ENCODE measurements at regions of chr17 and their contacts with region 1.

Region 1: GRCh38 chr17:80101011-80101945 is at the start of gene GAA:
- DNase-seq: peak; percentile 84 to 91
- ATAC-seq: peak; percentile 80 to 89
- H3K4me3 ChIP-seq: peak within 1 kb of the TSS; percentile 88
- H3K27ac ChIP-seq: peak within 1 kb of the TSS; percentile 90 to 94
- H3K4me1 ChIP-seq: peaks cover 11% of the 10 kb centered on the region
- CTCF ChIP-seq: peak; percentile 99
- EP300 ChIP-seq: no peak
- POLR2A ChIP-seq: peak; percentile 93
- RAD21 ChIP-seq: peak; percentile 18 to 68; a peak in 3 of 5 replicates
- polyA plus RNA-seq, gene GAA: 5.7 and 9.5 TPM in 2 replicates

Region 2: GRCh38 chr17:79839363-79840268 is 261.7 kb before region 1 on chr17 and contains the start of gene CBX4:
- CTCF ChIA-PET with region 1: no interaction called
- POLR2A ChIA-PET with region 1: no interaction called
- DNase-seq: peak; percentile 87 to 97
- ATAC-seq: peak; percentile 61 to 73
- H3K4me3 ChIP-seq: peak within 1 kb of the TSS; percentile 82
- H3K27ac ChIP-seq: peak within 1 kb of the TSS; percentile 95 to 98
- H3K4me1 ChIP-seq: peaks cover 52% of the 10 kb centered on the region
- CTCF ChIP-seq: peak; percentile 99
- EP300 ChIP-seq: peak in 1 of 2 experiments; percentile 55; a peak in 1 of 5 replicates
- POLR2A ChIP-seq: peak; percentile 77
- RAD21 ChIP-seq: peak; percentile 55 to 90
- polyA plus RNA-seq, gene CBX4: 21.9 and 34.1 TPM in 2 replicates

Region 3: DNA sequence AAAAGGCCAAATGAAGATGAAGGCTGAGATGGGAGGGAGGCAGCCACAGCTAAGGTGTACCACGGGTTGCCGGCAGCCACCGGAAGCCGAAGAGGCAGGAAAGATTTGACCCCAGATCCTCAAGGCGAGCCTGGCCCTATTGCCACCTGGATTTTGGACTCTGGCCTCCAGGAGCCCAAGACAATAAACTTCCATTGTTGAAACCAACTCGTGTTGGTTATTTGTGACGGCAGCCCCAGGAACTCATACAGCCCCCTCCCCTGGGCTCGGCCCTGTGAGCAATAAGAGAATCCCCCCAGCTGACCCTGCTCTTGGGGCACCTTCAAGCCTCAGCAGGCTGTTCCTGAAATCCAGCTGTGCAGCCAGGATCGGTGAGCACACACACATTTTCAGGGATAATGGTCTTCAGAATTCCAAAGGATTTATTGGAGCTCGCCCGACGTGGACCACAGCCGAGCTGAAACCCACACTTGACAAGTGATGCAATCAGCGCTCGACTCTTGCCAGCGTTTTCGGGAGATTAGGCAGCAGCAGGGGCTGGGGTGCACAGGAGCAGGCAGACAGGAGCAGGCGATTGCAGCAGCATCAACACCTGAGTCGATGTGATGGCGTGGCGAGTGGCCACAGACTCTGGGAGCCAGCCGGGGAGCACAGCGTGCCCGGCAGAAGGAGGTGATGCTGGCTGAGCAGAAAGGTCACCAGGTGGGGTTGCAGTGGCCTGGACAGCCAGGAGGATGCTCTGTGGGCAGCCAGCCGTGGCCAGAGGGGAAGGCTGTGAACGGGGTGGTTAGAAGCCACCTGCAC is 239.7 kb before region 1 on chr17:
- CTCF ChIA-PET with region 1: no interaction called
- POLR2A ChIA-PET with region 1: no interaction called
- DNase-seq: no peak
- ATAC-seq: peak in 1 of 2 experiments; percentile 13; a peak in 1 of 6 replicates
- H3K4me3 ChIP-seq: no peak overlapping the region
- H3K27ac ChIP-seq: no peak overlapping the region
- H3K4me1 ChIP-seq: no peaks in the 10 kb centered on the region
- CTCF ChIP-seq: no peak
- EP300 ChIP-seq: no peak
- POLR2A ChIP-seq: no peak
- RAD21 ChIP-seq: no peak

Region 4: DNA sequence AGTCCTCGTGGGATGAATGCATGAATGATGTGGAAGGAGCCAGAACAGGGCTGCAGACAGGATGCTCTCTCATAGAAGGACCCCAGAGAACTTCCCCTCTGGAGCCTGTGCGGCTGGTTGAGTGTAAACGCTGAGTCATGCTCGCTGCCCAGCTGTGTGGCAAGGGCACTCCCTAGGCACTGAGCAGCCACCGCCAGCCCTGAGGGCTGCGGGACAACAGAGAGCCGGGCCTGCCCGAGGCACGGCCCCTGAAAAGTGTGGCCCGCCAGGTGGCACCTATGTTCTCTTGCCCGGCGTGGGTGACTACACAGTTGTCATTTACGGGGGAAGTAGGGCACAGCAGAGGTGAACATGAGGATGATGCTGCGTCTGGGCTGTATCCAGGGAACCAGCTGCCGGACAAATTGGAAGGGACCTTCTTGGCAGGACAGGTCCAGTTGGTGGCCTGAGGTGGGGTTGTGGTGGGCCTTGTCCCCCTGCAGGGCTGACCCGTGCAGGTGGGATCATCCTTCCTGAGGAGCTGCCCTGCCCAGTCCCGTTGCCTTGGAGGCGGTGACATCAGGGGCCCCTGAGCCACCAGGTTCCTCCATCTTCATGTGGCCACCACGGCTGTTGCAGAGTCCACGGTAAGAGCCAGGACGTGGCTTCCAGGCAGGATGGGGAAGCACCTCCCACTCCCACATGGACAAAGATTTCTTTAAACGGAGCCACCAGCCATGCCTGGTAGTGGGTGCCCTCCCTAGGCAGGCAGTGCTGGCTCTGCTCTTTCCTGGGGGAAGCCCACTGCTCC is 167.2 kb before region 1 on chr17:
- CTCF ChIA-PET with region 1: no interaction called
- POLR2A ChIA-PET with region 1: no interaction called
- DNase-seq: peak; percentile 58 to 60
- ATAC-seq: peak; percentile 21 to 53; a peak in 4 of 6 replicates
- H3K4me3 ChIP-seq: no peak overlapping the region
- H3K27ac ChIP-seq: peak overlapping the region; percentile 94
- H3K4me1 ChIP-seq: peaks cover 69% of the 10 kb centered on the region
- CTCF ChIP-seq: peak; percentile 6; the same call in 1 of the 3 replicates
- EP300 ChIP-seq: no peak
- POLR2A ChIP-seq: no peak
- RAD21 ChIP-seq: no peak; a peak in 1 of 5 replicates

Region 5: GRCh38 chr17:80071116-80071980 is 29.9 kb before region 1 on chr17:
- CTCF ChIA-PET with region 1: interaction called, 13 read pairs
- POLR2A ChIA-PET with region 1: no interaction called
- DNase-seq: no peak
- ATAC-seq: peak in 1 of 2 experiments; percentile 19; a peak in 1 of 6 replicates
- H3K4me3 ChIP-seq: no peak overlapping the region
- H3K27ac ChIP-seq: no peak overlapping the region
- H3K4me1 ChIP-seq: no peaks in the 10 kb centered on the region
- CTCF ChIP-seq: no peak
- EP300 ChIP-seq: no peak
- POLR2A ChIP-seq: no peak
- RAD21 ChIP-seq: no peak

Region 6: GRCh38 chr17:80124351-80124981 is 23.2 kb after region 1 on chr17:
- CTCF ChIA-PET with region 1: interaction called, 99 read pairs
- POLR2A ChIA-PET with region 1: interaction called, 5 read pairs
- DNase-seq: peak; percentile 45 to 53
- ATAC-seq: peak; percentile 71 to 87
- H3K4me3 ChIP-seq: no peak overlapping the region
- H3K27ac ChIP-seq: no peak overlapping the region
- H3K4me1 ChIP-seq: no peaks in the 10 kb centered on the region
- CTCF ChIP-seq: peak; percentile 36
- EP300 ChIP-seq: no peak
- POLR2A ChIP-seq: no peak; the same call in 1 of the 2 replicates
- RAD21 ChIP-seq: peak; percentile 19 to 32; a peak in 2 of 5 replicates

Region 7: DNA sequence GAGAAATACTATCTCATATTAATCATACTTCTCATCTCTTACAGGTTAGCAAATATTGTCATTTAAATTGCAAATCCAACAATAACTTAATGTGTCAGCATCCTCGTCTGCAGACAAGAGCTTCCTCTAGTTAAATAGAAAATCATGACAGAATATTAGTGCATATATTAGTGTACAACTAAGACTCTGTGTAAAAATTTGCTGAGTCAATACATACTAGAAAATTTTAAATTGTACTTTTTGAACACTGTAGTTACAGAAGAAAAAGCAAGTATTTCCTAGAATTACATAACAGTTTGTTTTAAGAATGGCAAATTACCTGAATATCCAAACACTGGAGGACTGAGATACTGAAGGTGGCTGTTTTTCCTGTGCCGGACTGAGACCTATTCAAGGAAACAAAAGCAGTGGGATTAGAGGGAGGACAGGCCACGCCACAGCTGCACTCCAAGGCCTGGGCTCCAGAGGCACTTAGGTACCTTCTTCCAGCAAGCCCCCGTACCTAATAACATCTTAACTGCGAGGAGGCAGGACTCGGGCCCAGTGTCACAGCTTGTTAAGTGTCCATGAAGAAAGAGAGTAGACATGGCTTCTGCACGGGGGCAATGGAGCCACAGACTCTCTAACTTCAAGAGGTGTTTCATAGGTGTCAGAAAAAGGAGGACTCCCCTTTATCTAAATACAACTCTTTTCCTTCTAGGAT is 40.3 kb after region 1 on chr17:
- CTCF ChIA-PET with region 1: interaction called, 17 read pairs
- POLR2A ChIA-PET with region 1: interaction called, 21 read pairs
- DNase-seq: no peak
- ATAC-seq: no peak
- H3K4me3 ChIP-seq: no peak overlapping the region
- H3K27ac ChIP-seq: no peak overlapping the region
- H3K4me1 ChIP-seq: peaks cover 19% of the 10 kb centered on the region
- CTCF ChIP-seq: no peak
- EP300 ChIP-seq: no peak
- POLR2A ChIP-seq: no peak
- RAD21 ChIP-seq: no peak

Region 8: GRCh38 chr17:80187515-80187941 is 86.2 kb after region 1 on chr17:
- CTCF ChIA-PET with region 1: interaction called, 18 read pairs
- POLR2A ChIA-PET with region 1: interaction called, 3 read pairs
- DNase-seq: peak in 1 of 2 experiments; percentile 51
- ATAC-seq: peak; percentile 30 to 70; a peak in 5 of 6 replicates
- H3K4me3 ChIP-seq: peak overlapping the region; percentile 27; the same call in 1 of the 3 replicates
- H3K27ac ChIP-seq: peak overlapping the region; percentile 67 to 70
- H3K4me1 ChIP-seq: peaks cover 15% of the 10 kb centered on the region
- CTCF ChIP-seq: no peak
- EP300 ChIP-seq: no peak
- POLR2A ChIP-seq: no peak
- RAD21 ChIP-seq: no peak

Region 9: DNA sequence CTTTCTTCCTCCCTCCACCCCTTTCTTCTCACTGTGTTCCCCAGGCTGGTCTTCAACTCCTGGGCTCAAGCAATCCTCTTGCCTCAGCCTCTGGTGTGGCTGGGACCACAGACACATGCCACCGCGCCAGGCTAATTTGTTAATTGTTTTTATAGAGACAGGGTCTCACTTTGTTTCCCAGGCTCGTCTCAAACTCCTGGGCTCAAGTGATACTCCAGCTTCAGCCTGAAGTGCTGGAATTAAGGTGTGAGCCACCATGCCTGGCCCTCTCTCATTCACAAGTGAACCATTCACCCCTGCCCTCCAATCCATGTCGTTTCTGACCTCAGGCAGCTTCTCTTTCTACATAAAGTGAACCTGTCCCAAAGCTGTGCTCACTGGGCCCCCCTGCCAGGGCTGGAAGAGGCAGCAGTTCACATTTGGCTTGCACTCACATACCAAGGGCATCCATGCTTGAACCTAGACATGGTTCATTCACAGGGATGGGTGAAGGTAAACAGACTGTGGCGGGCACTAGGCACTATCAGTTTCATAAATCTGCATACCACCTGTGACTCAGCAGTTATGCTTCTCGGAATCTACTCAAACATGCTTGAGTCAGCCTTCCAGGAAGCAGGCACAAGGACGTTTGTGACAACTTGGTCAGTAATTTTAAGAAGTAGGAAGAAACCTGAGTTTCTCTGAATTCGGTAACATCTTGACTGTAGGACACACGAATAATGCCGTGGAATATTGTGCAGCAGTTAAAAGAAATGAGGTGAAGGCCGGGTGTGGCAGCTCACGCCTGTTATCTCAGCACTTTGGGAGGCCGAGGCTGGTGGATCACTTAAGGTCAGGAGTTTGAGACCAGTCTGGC is 153.3 kb after region 1 on chr17:
- CTCF ChIA-PET with region 1: interaction called, 40 read pairs
- POLR2A ChIA-PET with region 1: interaction called, 5 read pairs
- DNase-seq: peak; percentile 97 to 99
- ATAC-seq: peak; percentile 90
- H3K4me3 ChIP-seq: no peak overlapping the region
- H3K27ac ChIP-seq: peak overlapping the region; percentile 94 to 99
- H3K4me1 ChIP-seq: peaks cover 72% of the 10 kb centered on the region
- CTCF ChIP-seq: no peak
- EP300 ChIP-seq: peak; percentile 83 to 92; a peak in 4 of 5 replicates
- POLR2A ChIP-seq: no peak
- RAD21 ChIP-seq: peak in 1 of 2 experiments; percentile 29; a peak in 3 of 5 replicates

Region 10: DNA sequence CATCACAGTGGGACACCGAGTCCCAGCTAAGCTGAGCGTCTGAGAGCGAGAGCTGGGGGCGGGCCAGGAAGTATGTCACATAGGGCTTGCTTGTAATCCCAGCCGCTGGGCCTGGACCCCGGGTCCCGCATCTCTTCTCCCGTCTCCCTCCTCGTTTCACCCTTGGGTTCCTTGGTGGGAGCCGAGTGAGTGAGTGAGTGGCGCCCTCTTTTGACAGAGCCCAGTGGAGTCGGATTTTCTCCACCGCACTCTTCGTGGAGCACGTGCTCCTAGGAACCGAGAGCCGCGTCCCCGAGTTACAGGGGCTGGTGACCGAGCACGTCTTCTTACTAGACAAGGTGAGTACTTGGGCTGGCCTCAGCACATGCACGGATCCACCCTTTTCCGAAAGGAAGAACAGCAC is 262.9 kb after region 1 on chr17:
- CTCF ChIA-PET with region 1: interaction called, 19 read pairs
- POLR2A ChIA-PET with region 1: no interaction called
- DNase-seq: peak; percentile 37 to 38
- ATAC-seq: peak; percentile 31 to 70; a peak in 4 of 6 replicates
- H3K4me3 ChIP-seq: no peak overlapping the region
- H3K27ac ChIP-seq: no peak overlapping the region
- H3K4me1 ChIP-seq: no peaks in the 10 kb centered on the region
- CTCF ChIP-seq: peak; percentile 43
- EP300 ChIP-seq: no peak
- POLR2A ChIP-seq: no peak
- RAD21 ChIP-seq: peak; percentile 45 to 67; a peak in 4 of 5 replicates